CD4-positive, alpha-beta T cell (primary cell): ENCODE measurements at regions of chr20 and their contacts with region 1.

Region 1: GRCh38 chr20:38962044-38962927 is at the start of gene DHX35:
- DNase-seq: peak; percentile 96 to 100 (median 98)
- ATAC-seq: peak; percentile 98
- H3K4me3 ChIP-seq: peak within 1 kb of the TSS; percentile 80
- H3K4me3 Mint-ChIP-seq: peak within 1 kb of the TSS; percentile 97
- H3K27ac ChIP-seq: peak within 1 kb of the TSS; percentile 73 to 77
- H3K27ac Mint-ChIP-seq: peak within 1 kb of the TSS; percentile 88
- H3K4me1 ChIP-seq: peaks cover 16% of the 10 kb centered on the region
- H3K4me1 Mint-ChIP-seq: peaks cover 33% of the 10 kb centered on the region
- H3K27me3 ChIP-seq: no peaks in the 10 kb centered on the region
- H3K27me3 Mint-ChIP-seq: no peaks in the 10 kb centered on the region
- CTCF ChIP-seq: peak; percentile 23
- total RNA-seq, gene DHX35: 7.3 to 7.6 TPM

Region 2: GRCh38 chr20:38472513-38473372 is 489.5 kb before region 1 on chr20 and contains the start of gene RALGAPB:
- CTCF ChIA-PET with region 1: no interaction called
- POLR2A ChIA-PET with region 1: interaction called, 4 read pairs
- intact Hi-C with region 1: loop called in 1 of 2 experiments (anchors 10 kb)
- DNase-seq: peak; percentile 96 to 100 (median 98)
- ATAC-seq: peak; percentile 95
- H3K4me3 ChIP-seq: peak within 1 kb of the TSS; percentile 84
- H3K4me3 Mint-ChIP-seq: peak within 1 kb of the TSS; percentile 89
- H3K27ac ChIP-seq: peak within 1 kb of the TSS; percentile 37 to 81
- H3K27ac Mint-ChIP-seq: peak within 1 kb of the TSS; percentile 88
- H3K4me1 ChIP-seq: peaks cover 27% of the 10 kb centered on the region
- H3K4me1 Mint-ChIP-seq: peaks cover 58% of the 10 kb centered on the region
- H3K27me3 ChIP-seq: peaks cover 0 to 3% of the 10 kb centered on the region in 2 experiments
- H3K27me3 Mint-ChIP-seq: no peaks in the 10 kb centered on the region
- CTCF ChIP-seq: peak; percentile 61
- total RNA-seq, gene RALGAPB: 30.4 to 31.9 TPM

Region 3: GRCh38 chr20:38875175-38875993 is 86.9 kb before region 1 on chr20:
- CTCF ChIA-PET with region 1: no interaction called
- POLR2A ChIA-PET with region 1: interaction called, 17 read pairs
- intact Hi-C with region 1: no loop called
- DNase-seq: peak; percentile 45 to 89 (median 62)
- ATAC-seq: peak; percentile 51
- H3K4me3 ChIP-seq: peak overlapping the region; percentile 40
- H3K4me3 Mint-ChIP-seq: peak overlapping the region; percentile 84
- H3K27ac ChIP-seq: peak overlapping the region; percentile 76 to 89
- H3K27ac Mint-ChIP-seq: peak overlapping the region; percentile 89
- H3K4me1 ChIP-seq: peaks cover 70% of the 10 kb centered on the region
- H3K4me1 Mint-ChIP-seq: peaks cover 98% of the 10 kb centered on the region
- H3K27me3 ChIP-seq: no peaks in the 10 kb centered on the region
- H3K27me3 Mint-ChIP-seq: no peaks in the 10 kb centered on the region
- CTCF ChIP-seq: no peak

Region 4: GRCh38 chr20:38926142-38926933 is 35.9 kb before region 1 on chr20 and contains the start of gene FAM83D:
- CTCF ChIA-PET with region 1: interaction called, 25 read pairs
- POLR2A ChIA-PET with region 1: interaction called, 38 read pairs
- intact Hi-C with region 1: loop called (anchors 1 kb)
- DNase-seq: peak; percentile 83 to 97 (median 90)
- ATAC-seq: peak; percentile 95
- H3K4me3 ChIP-seq: peak within 1 kb of the TSS; percentile 74
- H3K4me3 Mint-ChIP-seq: peak within 1 kb of the TSS; percentile 90
- H3K27ac ChIP-seq: peak within 1 kb of the TSS in 1 of 2 donors; percentile 7
- H3K27ac Mint-ChIP-seq: peak within 1 kb of the TSS; percentile 76
- H3K4me1 ChIP-seq: peaks cover 37% of the 10 kb centered on the region
- H3K4me1 Mint-ChIP-seq: peaks cover 31% of the 10 kb centered on the region
- H3K27me3 ChIP-seq: no peaks in the 10 kb centered on the region
- H3K27me3 Mint-ChIP-seq: no peaks in the 10 kb centered on the region
- CTCF ChIP-seq: peak; percentile 43
- total RNA-seq, gene FAM83D: 1.8 to 1.9 TPM

Region 5: GRCh38 chr20:38995536-38996044 is 33.3 kb after region 1 on chr20:
- CTCF ChIA-PET with region 1: no interaction called
- POLR2A ChIA-PET with region 1: interaction called, 11 read pairs
- intact Hi-C with region 1: no loop called
- DNase-seq: no peak
- ATAC-seq: no peak
- H3K4me3 ChIP-seq: no peak overlapping the region
- H3K4me3 Mint-ChIP-seq: no peak overlapping the region
- H3K27ac ChIP-seq: no peak overlapping the region
- H3K27ac Mint-ChIP-seq: no peak overlapping the region
- H3K4me1 ChIP-seq: peaks cover 7% of the 10 kb centered on the region
- H3K4me1 Mint-ChIP-seq: peaks cover 25% of the 10 kb centered on the region
- H3K27me3 ChIP-seq: no peaks in the 10 kb centered on the region
- H3K27me3 Mint-ChIP-seq: no peaks in the 10 kb centered on the region
- CTCF ChIP-seq: no peak

Region 6: DNA sequence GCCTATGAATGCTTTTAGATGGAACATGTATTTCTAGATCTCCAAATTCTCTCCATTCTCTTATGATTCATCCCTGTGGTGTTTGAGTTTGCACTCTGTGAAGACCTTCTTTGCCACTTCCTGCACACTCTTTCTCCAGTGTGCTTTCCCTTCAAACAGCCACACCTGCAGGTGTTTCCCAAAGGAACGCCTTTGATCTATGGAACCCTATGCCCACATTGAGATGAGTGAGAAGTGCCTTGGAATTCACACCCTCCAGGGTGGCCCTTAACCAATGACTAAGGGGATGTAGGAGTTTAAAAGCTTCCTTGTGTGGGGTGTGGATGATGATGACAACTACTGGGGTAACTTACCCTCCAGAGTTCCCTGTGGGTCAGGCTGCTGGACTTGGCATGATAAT is 569.9 kb after region 1 on chr20:
- CTCF ChIA-PET with region 1: no interaction called
- POLR2A ChIA-PET with region 1: no interaction called
- intact Hi-C with region 1: no loop called
- DNase-seq: no peak
- ATAC-seq: no peak
- H3K4me3 ChIP-seq: no peak overlapping the region
- H3K4me3 Mint-ChIP-seq: no peak overlapping the region
- H3K27ac ChIP-seq: no peak overlapping the region
- H3K27ac Mint-ChIP-seq: no peak overlapping the region
- H3K4me1 ChIP-seq: no peaks in the 10 kb centered on the region
- H3K4me1 Mint-ChIP-seq: no peaks in the 10 kb centered on the region
- H3K27me3 ChIP-seq: no peaks in the 10 kb centered on the region
- H3K27me3 Mint-ChIP-seq: peaks cover 6% of the 10 kb centered on the region
- CTCF ChIP-seq: no peak